BJ (cell line): ENCODE measurements at regions of chr9 and their contacts with region 1.

Region 1: GRCh38 chr9:27967210-27967609 is 393.9 kb upstream of the C9orf72 start:
- DNase-seq: no peak
- H3K4me3 ChIP-seq: no peak overlapping the region
- H3K27me3 ChIP-seq: no peaks in the 10 kb centered on the region
- CTCF ChIP-seq: no peak

Region 2: GRCh38 chr9:27925815-27926214 is 41.4 kb before region 1 on chr9:
- CTCF ChIA-PET with region 1: no interaction called
- POLR2A ChIA-PET with region 1: interaction called, 23 read pairs
- DNase-seq: no peak
- H3K4me3 ChIP-seq: no peak overlapping the region
- H3K27me3 ChIP-seq: no peaks in the 10 kb centered on the region
- CTCF ChIP-seq: no peak

Region 3: GRCh38 chr9:27954858-27955257 is 12.4 kb before region 1 on chr9:
- CTCF ChIA-PET with region 1: no interaction called
- POLR2A ChIA-PET with region 1: no interaction called
- DNase-seq: no peak
- H3K4me3 ChIP-seq: no peak overlapping the region
- H3K27me3 ChIP-seq: no peaks in the 10 kb centered on the region
- CTCF ChIP-seq: no peak

Region 4: GRCh38 chr9:28073270-28073669 is 106.1 kb after region 1 on chr9:
- CTCF ChIA-PET with region 1: no interaction called
- POLR2A ChIA-PET with region 1: no interaction called
- DNase-seq: peak; percentile 17
- H3K4me3 ChIP-seq: no peak overlapping the region
- H3K27me3 ChIP-seq: no peaks in the 10 kb centered on the region
- CTCF ChIP-seq: peak; percentile 61